Activated T-helper 2 cell treated with anti-CD3 and anti-CD28 coated beads, Interferon-gamma antibody, Interleukin-2, Interleukin-4, amounts not matched to agents 10 μg/mL and 5 μg/mL and 100 μg/mL, durations not matched to agents 14 hours and 24 hours and 36 hours (primary cell): ENCODE measurements at regions of chr3 and their contacts with region 1.

Region 1: DNA sequence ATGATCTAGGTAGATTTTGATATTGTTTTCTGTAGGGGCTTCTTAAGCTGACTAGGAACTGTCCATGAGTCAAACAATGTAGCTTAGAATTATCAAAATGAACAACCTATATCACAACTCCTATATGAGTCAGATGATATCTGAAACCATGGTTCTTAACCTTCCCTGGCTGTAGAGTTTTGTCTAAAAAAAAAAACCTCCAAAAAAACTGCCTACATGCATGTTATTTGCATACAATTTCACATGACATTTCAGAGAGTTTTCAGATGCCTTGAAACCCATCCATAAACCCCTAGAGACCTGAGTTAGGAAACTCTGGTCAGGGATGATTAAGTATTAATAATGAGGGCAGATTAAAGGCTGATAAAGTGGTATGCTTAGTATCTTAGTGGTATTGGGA is 157.0 kb downstream of the CHST2 start:
- DNase-seq: no peak
- H3K4me3 Mint-ChIP-seq: no peak overlapping the region
- H3K27ac Mint-ChIP-seq: peak overlapping the region; percentile 5
- H3K4me1 Mint-ChIP-seq: peaks cover 18% of the 10 kb centered on the region
- H3K27me3 Mint-ChIP-seq: no peaks in the 10 kb centered on the region

Region 2: DNA sequence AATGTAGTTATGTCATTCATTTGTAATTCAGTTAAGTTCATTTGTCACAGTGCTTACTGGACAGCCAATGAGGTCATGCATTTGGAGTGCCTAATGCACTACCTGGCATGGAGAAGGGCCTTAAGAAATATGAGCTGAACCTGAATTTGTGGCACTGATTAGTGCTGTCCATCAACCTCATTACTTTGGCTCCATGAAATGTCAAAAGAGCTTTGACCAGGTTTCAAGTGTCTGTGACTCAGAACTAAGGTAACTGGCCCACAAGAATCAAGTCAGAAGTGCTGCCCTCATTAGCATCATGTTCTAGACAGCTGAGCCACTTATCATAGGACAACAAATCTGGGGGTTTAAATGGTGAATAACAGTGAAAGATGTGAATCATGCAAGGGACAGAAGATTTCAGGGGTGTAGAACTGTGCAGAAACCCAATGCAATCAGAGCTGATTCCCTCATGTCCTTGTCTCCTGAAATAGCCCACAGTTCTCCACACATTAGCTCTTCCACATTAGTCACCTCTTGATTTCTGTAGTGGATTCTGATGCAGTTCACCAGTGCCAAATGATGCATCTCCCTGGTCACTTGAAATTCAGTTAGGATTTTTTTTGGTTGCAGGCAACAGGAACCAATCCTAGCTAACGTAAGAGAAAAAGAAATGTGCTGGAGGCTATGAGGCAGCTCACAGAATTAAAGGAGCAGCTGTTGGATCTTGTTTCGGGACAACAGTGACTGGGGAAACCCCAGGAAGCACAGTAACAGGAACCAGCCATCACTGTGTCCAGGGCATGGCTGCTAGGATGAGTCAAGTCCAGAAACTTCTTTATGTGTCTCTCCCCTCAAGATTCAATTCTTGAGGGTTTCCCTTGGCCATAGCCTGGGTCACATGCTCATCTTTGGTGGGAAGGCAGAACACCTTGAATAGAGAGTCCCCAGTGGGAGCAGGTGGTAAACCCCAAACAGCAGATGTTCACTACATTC is 118.3 kb before region 1 on chr3:
- intact Hi-C with region 1: no loop called
- DNase-seq: no peak
- H3K4me3 Mint-ChIP-seq: no peak overlapping the region
- H3K27ac Mint-ChIP-seq: peak overlapping the region; percentile 73
- H3K4me1 Mint-ChIP-seq: peaks cover 37% of the 10 kb centered on the region
- H3K27me3 Mint-ChIP-seq: no peaks in the 10 kb centered on the region

Region 3: GRCh38 chr3:143294188-143294587 is 17.6 kb after region 1 on chr3:
- intact Hi-C with region 1: loop called (anchors 2 kb)
- DNase-seq: no peak
- H3K4me3 Mint-ChIP-seq: no peak overlapping the region
- H3K27ac Mint-ChIP-seq: no peak overlapping the region
- H3K4me1 Mint-ChIP-seq: peaks cover 44% of the 10 kb centered on the region
- H3K27me3 Mint-ChIP-seq: no peaks in the 10 kb centered on the region